H1 (cell line): ENCODE measurements at regions of chr11 and their contacts with region 1.

Region 1: DNA sequence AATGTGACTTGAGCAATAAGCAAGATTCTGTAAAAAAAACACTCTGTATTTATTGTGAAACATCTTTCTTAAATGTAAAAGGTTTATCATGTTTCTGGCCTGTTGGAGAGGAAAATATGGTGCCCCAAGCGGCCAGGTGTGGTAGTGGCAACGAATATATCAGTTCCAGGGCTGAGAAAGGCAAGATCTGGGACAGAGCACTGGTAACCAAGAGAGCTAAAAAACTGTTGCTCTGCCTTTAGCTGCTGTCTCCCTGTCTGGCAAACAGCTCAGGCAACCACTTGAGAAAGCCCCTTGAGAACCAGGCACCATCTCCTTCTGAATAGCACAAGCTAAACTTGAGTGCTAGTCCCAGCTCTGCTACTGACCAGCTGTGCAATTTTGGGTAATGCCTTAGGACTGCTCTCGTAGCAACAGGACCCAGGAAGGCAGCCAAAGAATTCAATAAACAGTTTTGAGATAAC is 129.9 kb downstream of the KCNC1 start:
- DNase-seq: peak in 1 of 2 experiments; percentile 69
- H3K4me3 ChIP-seq: no peak overlapping the region
- H3K27ac ChIP-seq: no peak overlapping the region
- H3K4me1 ChIP-seq: peaks cover 2 to 8% (median 5%) of the 10 kb centered on the region in 4 experiments; a peak in 5 of 7 replicates
- H3K27me3 ChIP-seq: no peaks in the 10 kb centered on the region
- CTCF ChIP-seq: peak; percentile 53 to 70 (median 60)
- EP300 ChIP-seq: no peak
- POLR2A ChIP-seq: no peak
- RAD21 ChIP-seq: peak; percentile 19 to 37; a peak in 3 of 4 replicates

Region 2: GRCh38 chr11:17743808-17744119 is 120.7 kb before region 1 on chr11:
- CTCF ChIA-PET with region 1: interaction called, 14 read pairs
- POLR2A ChIA-PET with region 1: no interaction called
- DNase-seq: no peak
- H3K4me3 ChIP-seq: no peak overlapping the region
- H3K27ac ChIP-seq: no peak overlapping the region
- H3K4me1 ChIP-seq: peaks cover 0 to 7% (median 3%) of the 10 kb centered on the region in 4 experiments; a peak in 6 of 7 replicates
- H3K27me3 ChIP-seq: peaks cover 0 to 6% (median 2%) of the 10 kb centered on the region in 4 experiments; a peak in 5 of 7 replicates
- CTCF ChIP-seq: no peak
- EP300 ChIP-seq: no peak
- POLR2A ChIP-seq: no peak
- RAD21 ChIP-seq: no peak

Region 3: DNA sequence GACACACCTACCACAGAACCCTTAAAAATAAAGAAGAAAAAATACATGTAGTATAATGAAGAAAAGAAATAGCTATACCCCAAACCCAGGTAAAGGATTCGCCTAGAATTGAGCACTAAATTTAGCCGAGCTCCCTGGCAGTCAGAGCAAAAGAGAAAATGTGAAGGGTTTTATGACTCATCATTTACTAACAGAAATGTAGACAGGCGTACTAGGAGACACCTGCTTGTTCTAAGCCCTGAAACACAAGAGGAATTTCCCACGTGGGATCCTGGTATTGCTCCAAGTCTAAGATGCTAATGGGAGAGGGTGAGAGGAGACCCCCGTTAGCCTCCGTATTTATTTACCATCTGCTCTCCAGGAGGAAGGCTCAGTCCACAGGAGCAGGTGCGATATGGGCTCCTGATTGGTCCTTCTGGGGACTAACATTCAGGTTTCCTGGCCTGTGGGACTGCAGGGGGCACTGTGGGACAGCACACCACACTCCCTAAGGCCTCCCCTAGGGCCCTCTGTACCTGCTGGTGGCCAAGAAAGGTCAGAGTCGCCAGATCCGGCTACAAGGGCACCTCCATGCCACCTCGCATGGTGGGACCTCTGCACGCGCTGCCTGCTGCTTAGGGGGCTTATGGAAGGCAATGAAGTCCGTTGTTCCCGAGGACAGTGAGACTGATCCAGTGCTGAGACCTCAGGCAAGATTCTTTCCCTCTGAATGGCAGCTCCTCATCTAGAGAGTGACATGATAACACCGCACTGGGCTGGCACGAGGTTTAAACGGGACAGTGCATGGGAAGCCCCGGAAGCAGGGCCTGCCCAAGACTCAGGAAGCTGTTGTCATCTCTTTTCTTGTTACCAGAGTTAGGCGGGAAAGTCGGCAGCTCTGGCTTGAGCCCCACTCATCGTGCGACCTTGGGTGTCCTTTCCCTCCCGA is 104.1 kb before region 1 on chr11:
- CTCF ChIA-PET with region 1: interaction called, 29 read pairs
- POLR2A ChIA-PET with region 1: no interaction called
- DNase-seq: peak; percentile 77 to 84
- H3K4me3 ChIP-seq: no peak overlapping the region
- H3K27ac ChIP-seq: no peak overlapping the region
- H3K4me1 ChIP-seq: peaks cover 0 to 7% (median 1%) of the 10 kb centered on the region in 4 experiments; a peak in 3 of 7 replicates
- H3K27me3 ChIP-seq: no peaks in the 10 kb centered on the region
- CTCF ChIP-seq: peak; percentile 89 to 97 (median 91)
- EP300 ChIP-seq: no peak
- POLR2A ChIP-seq: no peak
- RAD21 ChIP-seq: peak; percentile 95 to 96

Region 4: GRCh38 chr11:17810746-17811145 is 53.8 kb before region 1 on chr11:
- CTCF ChIA-PET with region 1: interaction called, 27 read pairs
- POLR2A ChIA-PET with region 1: no interaction called
- DNase-seq: no peak
- H3K4me3 ChIP-seq: no peak overlapping the region
- H3K27ac ChIP-seq: no peak overlapping the region
- H3K4me1 ChIP-seq: no peaks in the 10 kb centered on the region
- H3K27me3 ChIP-seq: no peaks in the 10 kb centered on the region; a peak in 1 of 7 replicates
- CTCF ChIP-seq: no peak
- EP300 ChIP-seq: no peak
- POLR2A ChIP-seq: no peak
- RAD21 ChIP-seq: no peak

Region 5: DNA sequence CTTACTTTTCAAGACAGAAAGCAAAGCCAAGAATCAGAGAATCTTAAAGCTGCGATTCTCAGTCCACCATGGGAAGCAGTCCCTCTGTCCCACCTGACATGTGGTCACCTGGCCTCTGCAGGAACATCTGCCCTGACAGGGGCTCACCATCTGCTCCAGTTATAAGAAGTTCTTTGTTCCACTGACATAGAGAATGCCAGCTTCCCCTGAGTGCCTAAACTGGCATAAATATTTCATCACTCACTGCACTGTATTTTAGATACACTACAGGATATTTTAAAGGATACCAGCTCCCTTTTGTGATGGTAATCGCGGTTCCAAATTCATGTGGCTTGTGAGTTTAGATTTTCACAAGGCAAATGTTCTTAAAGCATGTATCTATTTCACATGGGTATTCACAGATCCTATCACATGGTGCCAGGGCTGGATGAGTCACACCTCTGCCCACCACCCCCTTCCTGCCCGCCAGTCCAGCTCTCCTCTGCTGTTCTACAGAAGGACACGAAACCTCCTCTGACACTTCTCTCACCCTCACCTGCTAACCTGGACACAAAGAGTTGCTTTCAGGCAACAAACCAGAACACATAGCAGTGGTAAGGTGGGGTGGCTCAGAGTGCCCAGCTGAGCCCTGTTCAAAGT is 24.4 kb before region 1 on chr11:
- CTCF ChIA-PET with region 1: interaction called, 21 read pairs
- POLR2A ChIA-PET with region 1: no interaction called
- DNase-seq: no peak
- H3K4me3 ChIP-seq: no peak overlapping the region
- H3K27ac ChIP-seq: no peak overlapping the region
- H3K4me1 ChIP-seq: no peaks in the 10 kb centered on the region
- H3K27me3 ChIP-seq: no peaks in the 10 kb centered on the region
- CTCF ChIP-seq: no peak
- EP300 ChIP-seq: no peak
- POLR2A ChIP-seq: no peak
- RAD21 ChIP-seq: no peak

Region 6: DNA sequence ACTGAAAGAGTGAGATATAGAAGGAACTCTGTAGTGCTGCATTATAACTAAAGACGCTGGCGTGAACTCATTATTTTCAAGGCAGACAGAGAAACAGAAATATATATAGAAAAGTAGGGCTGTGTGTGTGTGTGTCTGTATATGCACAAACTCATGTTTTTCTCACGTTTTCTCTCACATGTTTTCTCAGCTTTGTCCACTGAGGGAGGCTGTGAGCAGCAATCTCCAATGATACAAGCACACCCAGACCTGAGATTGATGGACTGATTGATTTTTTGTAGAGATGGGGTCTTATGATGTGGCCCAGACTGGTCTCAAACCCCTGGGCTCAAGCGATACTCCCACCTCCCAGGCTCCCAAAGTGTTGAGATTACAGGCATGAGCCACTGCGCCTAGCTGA is 25.8 kb after region 1 on chr11:
- CTCF ChIA-PET with region 1: interaction called, 184 read pairs
- POLR2A ChIA-PET with region 1: no interaction called
- DNase-seq: no peak
- H3K4me3 ChIP-seq: no peak overlapping the region
- H3K27ac ChIP-seq: no peak overlapping the region
- H3K4me1 ChIP-seq: peaks cover 2 to 12% (median 3%) of the 10 kb centered on the region in 4 experiments; a peak in 3 of 7 replicates
- H3K27me3 ChIP-seq: no peaks in the 10 kb centered on the region
- CTCF ChIP-seq: peak in 1 of 3 experiments; percentile 31; a peak in 1 of 4 replicates
- EP300 ChIP-seq: no peak
- POLR2A ChIP-seq: no peak
- RAD21 ChIP-seq: peak; percentile 12 to 26; a peak in 2 of 4 replicates

Region 7: GRCh38 chr11:17906436-17906835 is 41.9 kb after region 1 on chr11:
- CTCF ChIA-PET with region 1: interaction called, 51 read pairs
- POLR2A ChIA-PET with region 1: no interaction called
- DNase-seq: peak; percentile 70 to 73
- H3K4me3 ChIP-seq: peak overlapping the region in 1 of 4 experiments; percentile 20; a peak in 1 of 8 replicates
- H3K27ac ChIP-seq: no peak overlapping the region
- H3K4me1 ChIP-seq: peaks cover 4 to 10% (median 6%) of the 10 kb centered on the region in 4 experiments; a peak in 6 of 7 replicates
- H3K27me3 ChIP-seq: no peaks in the 10 kb centered on the region
- CTCF ChIP-seq: peak; percentile 62 to 86 (median 67)
- EP300 ChIP-seq: no peak
- POLR2A ChIP-seq: no peak
- RAD21 ChIP-seq: peak; percentile 74 to 79